ENCODE measurements at regions of chr11 and their contacts with region 1.

Region 1: GRCh38 chr11:11787305-11788062 is 54.3 kb upstream of the USP47 start:
- DNase-seq: peak in 1 of 2 experiments; percentile 82
- H3K4me3 ChIP-seq: no peak overlapping the region
- H3K27ac ChIP-seq: no peak overlapping the region
- H3K4me1 ChIP-seq: peaks cover 0 to 8% (median 6%) of the 10 kb centered on the region in 4 experiments; a peak in 4 of 7 replicates
- H3K27me3 ChIP-seq: no peaks in the 10 kb centered on the region
- CTCF ChIP-seq: peak; percentile 53 to 83 (median 81)
- EP300 ChIP-seq: no peak
- POLR2A ChIP-seq: no peak
- RAD21 ChIP-seq: peak; percentile 98

Region 2: DNA sequence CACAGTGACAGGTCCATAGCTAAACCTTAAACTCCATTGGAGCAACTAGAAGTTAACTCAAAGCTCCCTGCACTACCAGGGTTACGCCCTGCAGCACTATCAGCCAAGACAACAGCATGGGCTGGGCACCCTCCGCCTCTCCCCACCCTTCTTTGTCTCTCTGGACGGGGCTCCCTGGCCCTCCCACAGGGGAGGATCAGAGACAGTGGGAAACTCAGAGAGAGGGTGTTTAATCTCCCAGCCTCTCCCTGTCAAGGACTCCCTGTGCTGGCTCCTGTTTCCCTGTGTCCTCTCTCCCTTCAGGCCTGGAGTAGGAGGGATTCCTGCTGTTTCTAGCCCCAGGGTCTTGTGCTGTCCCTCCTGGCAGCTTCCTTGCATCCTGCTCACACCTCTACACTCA is 377.6 kb before region 1 on chr11:
- CTCF ChIA-PET with region 1: interaction called, 15 read pairs
- POLR2A ChIA-PET with region 1: no interaction called
- DNase-seq: no peak
- H3K4me3 ChIP-seq: no peak overlapping the region
- H3K27ac ChIP-seq: no peak overlapping the region
- H3K4me1 ChIP-seq: 0 out of 7 replicates have a peak, but pooled peaks cover 0 to 2% (median under 1%) of the 10 kb centered on the region in 4 experiments
- H3K27me3 ChIP-seq: no peaks in the 10 kb centered on the region
- CTCF ChIP-seq: no peak
- EP300 ChIP-seq: no peak
- POLR2A ChIP-seq: no peak
- RAD21 ChIP-seq: no peak

Region 3: DNA sequence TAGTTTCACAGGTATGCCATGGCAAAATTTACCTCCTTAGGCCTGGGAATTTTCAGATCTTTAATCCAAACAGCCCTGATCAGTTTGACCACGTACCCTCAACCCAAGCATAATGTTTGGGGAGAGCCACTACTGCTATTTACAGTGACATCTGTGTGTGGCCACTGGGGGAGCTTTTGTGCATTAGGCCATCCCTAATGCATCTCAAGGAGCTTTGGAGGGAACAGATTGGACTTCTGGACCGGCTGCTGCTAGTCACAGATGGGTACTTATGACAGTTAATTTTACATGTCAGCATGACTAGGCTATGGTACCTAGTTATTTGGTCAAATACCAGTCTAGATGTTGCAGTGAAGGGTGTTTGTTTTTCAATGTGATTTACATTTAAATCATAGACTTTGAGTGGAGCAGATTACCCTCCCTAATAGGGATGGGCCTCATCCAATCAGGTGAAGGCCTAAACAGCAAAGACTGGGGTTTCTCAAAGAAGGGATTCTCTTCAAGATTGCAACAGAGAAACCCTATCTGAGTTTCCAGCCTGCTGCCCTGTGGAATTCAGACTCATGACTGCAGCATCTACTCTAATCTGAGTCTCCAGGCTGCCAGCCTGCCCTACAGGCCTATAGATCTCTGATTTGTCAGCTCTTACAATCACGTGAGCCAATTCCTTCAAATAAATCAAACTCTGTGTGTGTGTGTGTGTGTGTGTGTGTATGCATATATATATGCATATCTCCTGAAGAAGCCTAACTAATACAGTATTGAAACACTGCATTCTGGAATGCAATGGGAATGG is 127.7 kb before region 1 on chr11:
- CTCF ChIA-PET with region 1: interaction called, 33 read pairs
- POLR2A ChIA-PET with region 1: interaction called, 3 read pairs
- DNase-seq: no peak
- H3K4me3 ChIP-seq: no peak overlapping the region
- H3K27ac ChIP-seq: no peak overlapping the region
- H3K4me1 ChIP-seq: peaks cover 4 to 11% (median 7%) of the 10 kb centered on the region in 4 experiments
- H3K27me3 ChIP-seq: no peaks in the 10 kb centered on the region
- CTCF ChIP-seq: peak in 2 of 3 experiments; percentile 24 to 40; a peak in 2 of 4 replicates
- EP300 ChIP-seq: no peak
- POLR2A ChIP-seq: no peak
- RAD21 ChIP-seq: peak; percentile 16 to 39; a peak in 2 of 4 replicates

Region 4: GRCh38 chr11:11743216-11743615 is 44.3 kb before region 1 on chr11:
- CTCF ChIA-PET with region 1: interaction called, 10 read pairs
- POLR2A ChIA-PET with region 1: no interaction called
- DNase-seq: no peak
- H3K4me3 ChIP-seq: no peak overlapping the region
- H3K27ac ChIP-seq: no peak overlapping the region
- H3K4me1 ChIP-seq: no peaks in the 10 kb centered on the region
- H3K27me3 ChIP-seq: no peaks in the 10 kb centered on the region
- CTCF ChIP-seq: no peak
- EP300 ChIP-seq: no peak
- POLR2A ChIP-seq: no peak
- RAD21 ChIP-seq: no peak

Region 5: DNA sequence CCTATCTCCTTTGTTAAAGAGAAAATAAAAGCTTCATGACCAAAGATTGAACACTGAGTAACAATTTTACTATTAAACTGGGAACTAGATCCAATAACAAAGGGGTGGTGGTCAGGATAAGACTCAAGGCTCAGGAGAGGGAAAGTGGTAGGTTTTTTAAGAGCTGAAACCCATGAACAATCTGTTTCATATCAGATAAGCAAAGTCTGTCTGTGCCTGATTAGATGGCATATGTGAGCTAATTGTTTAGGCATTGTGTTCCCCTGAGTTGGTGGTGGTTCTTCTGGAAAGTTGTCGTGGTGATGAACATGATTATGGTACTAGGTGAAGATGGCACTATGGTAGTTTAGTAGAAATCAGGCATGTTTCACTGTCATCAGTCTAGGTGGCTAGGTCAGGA is 78.7 kb after region 1 on chr11:
- CTCF ChIA-PET with region 1: no interaction called
- POLR2A ChIA-PET with region 1: no interaction called
- DNase-seq: no peak
- H3K4me3 ChIP-seq: no peak overlapping the region
- H3K27ac ChIP-seq: no peak overlapping the region
- H3K4me1 ChIP-seq: peaks cover 0 to 2% (median 2%) of the 10 kb centered on the region in 4 experiments; a peak in 3 of 7 replicates
- H3K27me3 ChIP-seq: no peaks in the 10 kb centered on the region
- CTCF ChIP-seq: no peak
- EP300 ChIP-seq: no peak
- POLR2A ChIP-seq: no peak
- RAD21 ChIP-seq: no peak